Endothelial cell of umbilical vein (primary cell): ENCODE measurements at regions of chr12 and their contacts with region 1.

Region 1: GRCh38 chr12:48197971-48198671 is 5.0 kb downstream of the OR10AD1 start:
- DNase-seq: peak; percentile 94
- H3K4me3 ChIP-seq: peak overlapping the region; percentile 23 to 71 (median 44)
- H3K27ac ChIP-seq: peak overlapping the region; percentile 67
- H3K4me1 ChIP-seq: peaks cover 10% of the 10 kb centered on the region
- H3K27me3 ChIP-seq: peaks cover 0 to 19% of the 10 kb centered on the region in 2 experiments
- CTCF ChIP-seq: no peak
- POLR2A ChIP-seq: peak; percentile 96

Region 2: DNA sequence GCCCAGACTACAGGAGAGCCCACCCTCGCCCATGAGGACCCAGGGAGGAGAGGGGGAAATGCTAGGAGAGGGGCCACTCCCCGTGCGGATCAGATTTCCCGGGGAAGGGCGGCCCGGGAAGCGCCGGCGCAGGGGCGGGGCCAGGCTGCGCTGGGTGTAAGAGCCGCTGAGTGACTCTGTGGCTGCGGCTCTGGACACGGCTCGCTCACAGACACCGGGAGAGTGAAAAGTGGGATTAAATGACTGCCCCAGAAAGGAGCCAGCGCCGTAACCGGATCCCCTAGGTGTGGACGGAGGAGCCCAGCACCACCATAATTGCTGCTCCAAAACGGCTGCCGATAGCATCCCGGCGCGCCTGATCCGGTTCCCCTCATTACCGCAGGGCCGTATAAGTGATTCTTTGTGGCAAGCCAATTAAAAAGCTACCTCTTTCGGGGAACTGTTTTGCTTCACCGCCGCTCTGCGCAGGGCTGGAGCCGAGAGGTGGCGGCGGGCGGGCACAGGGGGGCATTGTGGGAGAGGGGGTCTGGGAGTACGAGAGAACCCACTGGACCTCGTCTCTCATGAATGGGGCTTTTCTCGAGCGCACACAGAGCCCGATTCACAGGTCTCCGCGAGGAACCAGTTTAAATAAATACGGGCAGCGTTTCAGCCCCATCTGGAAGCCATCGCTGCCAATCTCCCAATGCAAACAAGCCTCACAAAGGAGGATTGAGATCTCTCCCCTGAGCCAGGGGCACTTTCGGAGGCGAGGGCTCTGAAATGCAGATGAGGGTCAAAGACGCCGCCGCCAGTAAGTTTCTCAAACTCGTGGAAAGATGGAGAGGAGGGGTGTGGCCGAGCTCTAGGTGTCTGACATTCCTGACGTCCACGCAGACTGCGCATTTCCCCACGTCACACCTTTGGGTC is 196.4 kb before region 1 on chr12:
- CTCF ChIA-PET with region 1: no interaction called
- POLR2A ChIA-PET with region 1: no interaction called
- dilution Hi-C with region 1: no loop called
- intact Hi-C with region 1: loop called (anchors 5 kb)
- DNase-seq: peak; percentile 39
- H3K4me3 ChIP-seq: peak overlapping the region; percentile 34 to 66 (median 61)
- H3K27ac ChIP-seq: no peak overlapping the region
- H3K4me1 ChIP-seq: peaks cover 24% of the 10 kb centered on the region
- H3K27me3 ChIP-seq: peaks cover 75 to 93% of the 10 kb centered on the region in 2 experiments
- CTCF ChIP-seq: no peak
- POLR2A ChIP-seq: no peak

Region 3: DNA sequence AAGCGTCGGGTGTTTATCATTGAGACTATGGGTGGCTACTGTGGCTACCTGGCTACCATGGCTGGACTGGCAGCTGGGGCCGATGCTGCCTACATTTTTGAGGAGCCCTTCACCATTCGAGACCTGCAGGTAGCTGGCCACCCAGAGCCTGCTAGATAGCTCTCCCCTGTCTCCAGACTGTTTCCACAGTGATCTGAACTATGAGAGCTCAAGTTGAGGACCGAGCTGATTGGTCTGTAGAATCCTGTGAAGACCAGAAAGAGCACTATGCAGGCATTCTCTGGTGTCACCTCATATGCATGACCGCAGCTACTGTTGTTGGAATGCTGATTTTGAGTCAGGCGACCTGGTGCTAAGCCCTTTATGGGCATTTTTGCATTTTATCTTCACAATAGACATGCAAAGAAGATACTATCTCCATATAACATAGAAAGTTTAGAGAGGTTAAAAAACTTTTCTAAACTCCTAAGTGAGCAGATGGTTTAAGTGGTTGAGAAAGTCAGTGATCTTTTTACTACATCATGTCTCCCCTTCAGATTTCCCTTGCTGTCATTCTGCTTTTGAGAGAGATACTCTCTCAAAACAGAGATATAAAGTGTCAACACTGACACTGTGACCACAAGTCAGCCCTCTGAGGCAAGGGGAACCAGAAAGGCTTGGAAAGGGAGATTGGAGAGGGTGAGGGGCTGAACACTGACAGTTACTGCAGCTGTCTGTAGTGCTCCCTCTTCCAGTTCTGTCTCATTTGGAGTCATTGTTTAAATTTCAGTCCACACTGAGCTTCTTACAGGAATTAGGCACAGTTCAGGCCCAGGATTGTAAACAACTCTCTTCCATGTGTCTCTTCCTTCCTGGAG is 55.1 kb before region 1 on chr12:
- CTCF ChIA-PET with region 1: no interaction called
- POLR2A ChIA-PET with region 1: no interaction called
- dilution Hi-C with region 1: no loop called
- intact Hi-C with region 1: no loop called
- DNase-seq: no peak
- H3K4me3 ChIP-seq: no peak overlapping the region
- H3K27ac ChIP-seq: no peak overlapping the region
- H3K4me1 ChIP-seq: no peaks in the 10 kb centered on the region
- H3K27me3 ChIP-seq: no peaks in the 10 kb centered on the region
- CTCF ChIP-seq: no peak
- POLR2A ChIP-seq: no peak

Region 4: DNA sequence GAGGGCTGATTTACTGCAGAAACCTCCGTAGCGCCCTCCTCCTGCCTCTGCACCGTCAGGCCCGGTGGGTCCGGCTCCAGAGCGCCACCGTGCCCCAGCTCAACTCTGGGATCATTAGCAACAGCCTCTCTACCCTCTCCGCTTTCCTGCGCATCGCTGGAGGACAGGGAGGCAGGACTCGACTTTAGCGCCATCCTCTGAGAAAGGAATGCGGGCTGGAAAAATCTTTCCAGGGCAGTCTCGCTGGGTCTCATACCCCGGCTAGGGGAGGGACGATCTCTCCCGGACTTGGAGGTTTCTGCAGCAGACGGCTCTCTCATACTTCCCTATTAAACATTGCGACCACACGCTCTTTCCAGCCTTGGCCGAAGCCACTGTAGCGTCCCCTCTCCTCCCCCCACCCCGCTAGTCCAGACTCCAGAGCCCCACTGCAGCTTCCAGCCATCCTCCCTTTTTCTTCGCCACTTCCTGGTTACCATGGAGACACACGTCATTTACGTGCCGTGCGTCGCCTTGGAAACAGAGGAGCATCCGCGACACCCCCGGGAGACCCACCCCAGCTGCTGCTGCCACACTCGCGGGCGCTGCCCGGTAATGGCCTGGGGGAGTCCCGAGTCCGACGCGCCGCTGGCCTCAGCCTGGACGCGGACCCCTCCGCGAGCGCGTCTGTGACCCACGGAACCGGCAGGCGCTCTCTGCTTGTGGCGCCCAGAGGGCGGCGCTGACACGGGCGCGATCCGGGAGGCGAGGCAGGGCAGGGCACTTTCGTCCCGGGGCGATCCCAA is 14.8 kb before region 1 on chr12 and contains the start of gene CCDC184:
- CTCF ChIA-PET with region 1: interaction called, 18 read pairs
- POLR2A ChIA-PET with region 1: interaction called, 4 read pairs
- dilution Hi-C with region 1: no loop called
- intact Hi-C with region 1: loop called (anchors 1 kb)
- DNase-seq: peak; percentile 82
- H3K4me3 ChIP-seq: peak within 1 kb of the TSS; percentile 1 to 57 (median 48)
- H3K27ac ChIP-seq: no peak within 1 kb of the TSS
- H3K4me1 ChIP-seq: no peaks in the 10 kb centered on the region
- H3K27me3 ChIP-seq: peaks cover 45 to 57% of the 10 kb centered on the region in 2 experiments
- CTCF ChIP-seq: peak; percentile 28 to 67
- POLR2A ChIP-seq: no peak
- total RNA-seq, gene CCDC184: 0.18 TPM in 1 of 2 replicates, not detected in the other

Region 5: GRCh38 chr12:48350249-48351021 is 152.3 kb after region 1 on chr12 and contains the start of gene ZNF641:
- CTCF ChIA-PET with region 1: no interaction called
- POLR2A ChIA-PET with region 1: no interaction called
- dilution Hi-C with region 1: no loop called
- intact Hi-C with region 1: loop called (anchors 10 kb)
- DNase-seq: peak; percentile 51
- H3K4me3 ChIP-seq: peak within 1 kb of the TSS; percentile 56 to 87 (median 63)
- H3K27ac ChIP-seq: no peak within 1 kb of the TSS
- H3K4me1 ChIP-seq: peaks cover 5% of the 10 kb centered on the region
- H3K27me3 ChIP-seq: no peaks in the 10 kb centered on the region
- CTCF ChIP-seq: no peak
- POLR2A ChIP-seq: peak; percentile 39
- total RNA-seq, gene ZNF641: 5.0 and 6.7 TPM in 2 replicates